ENCODE measurements at regions of chr2 and their contacts with region 1.

Region 1: DNA sequence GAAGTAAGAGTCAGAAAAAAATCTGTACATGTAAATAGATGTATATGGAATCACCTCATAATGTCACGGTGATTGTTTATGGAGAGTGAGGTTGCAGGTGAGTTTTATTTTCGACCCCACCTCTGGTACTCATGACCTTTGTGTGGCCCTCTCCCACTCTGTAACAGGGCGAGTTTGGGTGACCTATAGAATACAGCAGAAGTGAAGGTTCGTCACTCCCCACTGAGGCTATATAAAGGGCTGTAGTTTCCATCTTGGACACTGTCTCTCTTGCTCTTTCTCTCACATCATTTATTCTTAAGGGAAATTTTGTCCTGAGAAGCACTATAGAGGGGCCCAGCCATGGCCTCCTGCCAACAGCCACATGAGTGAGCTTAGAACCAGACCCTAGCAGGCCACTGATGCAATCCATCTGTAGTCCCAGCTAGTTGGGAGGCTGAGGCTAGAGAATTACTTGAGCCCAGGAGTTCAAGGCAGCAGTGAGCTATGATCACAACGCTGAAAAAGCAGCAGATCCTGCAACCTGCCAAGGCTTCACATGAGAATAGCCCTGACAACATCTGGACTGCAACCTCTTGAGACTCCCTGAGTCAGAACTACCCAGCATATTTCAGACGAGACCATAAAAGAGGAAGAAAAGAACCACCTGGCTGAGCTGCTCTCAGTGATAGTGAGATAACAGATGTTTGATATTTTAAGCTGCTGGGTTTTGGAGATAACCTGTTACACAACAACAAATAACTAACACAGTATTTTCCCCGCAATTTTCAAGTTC is 74.3 kb upstream of the SLC1A4 start:
- DNase-seq: no peak
- ATAC-seq: no peak
- H3K4me3 ChIP-seq: no peak overlapping the region
- H3K4me3 Mint-ChIP-seq: no peak overlapping the region
- H3K27ac ChIP-seq: no peak overlapping the region
- H3K27ac Mint-ChIP-seq: no peak overlapping the region
- H3K4me1 ChIP-seq: peaks cover 25% of the 10 kb centered on the region
- H3K4me1 Mint-ChIP-seq: peaks cover 18 to 19% of the 10 kb centered on the region in 2 donors
- H3K27me3 ChIP-seq: no peaks in the 10 kb centered on the region
- H3K27me3 Mint-ChIP-seq: peaks cover 0 to 2% of the 10 kb centered on the region in 2 donors
- CTCF ChIP-seq: no peak

Region 2: GRCh38 chr2:64819774-64820696 is 94.9 kb before region 1 on chr2:
- intact Hi-C with region 1: no loop called
- DNase-seq: peak; percentile 16 to 70
- ATAC-seq: peak; percentile 86 to 92 (median 88)
- H3K4me3 ChIP-seq: peak overlapping the region; percentile 5
- H3K4me3 Mint-ChIP-seq: peak overlapping the region; percentile 69
- H3K27ac ChIP-seq: peak overlapping the region; percentile 89
- H3K27ac Mint-ChIP-seq: peak overlapping the region; percentile 88 to 91
- H3K4me1 ChIP-seq: peaks cover 13% of the 10 kb centered on the region
- H3K4me1 Mint-ChIP-seq: peaks cover 19 to 21% of the 10 kb centered on the region in 2 donors
- H3K27me3 ChIP-seq: no peaks in the 10 kb centered on the region
- H3K27me3 Mint-ChIP-seq: no peaks in the 10 kb centered on the region
- CTCF ChIP-seq: no peak

Region 3: DNA sequence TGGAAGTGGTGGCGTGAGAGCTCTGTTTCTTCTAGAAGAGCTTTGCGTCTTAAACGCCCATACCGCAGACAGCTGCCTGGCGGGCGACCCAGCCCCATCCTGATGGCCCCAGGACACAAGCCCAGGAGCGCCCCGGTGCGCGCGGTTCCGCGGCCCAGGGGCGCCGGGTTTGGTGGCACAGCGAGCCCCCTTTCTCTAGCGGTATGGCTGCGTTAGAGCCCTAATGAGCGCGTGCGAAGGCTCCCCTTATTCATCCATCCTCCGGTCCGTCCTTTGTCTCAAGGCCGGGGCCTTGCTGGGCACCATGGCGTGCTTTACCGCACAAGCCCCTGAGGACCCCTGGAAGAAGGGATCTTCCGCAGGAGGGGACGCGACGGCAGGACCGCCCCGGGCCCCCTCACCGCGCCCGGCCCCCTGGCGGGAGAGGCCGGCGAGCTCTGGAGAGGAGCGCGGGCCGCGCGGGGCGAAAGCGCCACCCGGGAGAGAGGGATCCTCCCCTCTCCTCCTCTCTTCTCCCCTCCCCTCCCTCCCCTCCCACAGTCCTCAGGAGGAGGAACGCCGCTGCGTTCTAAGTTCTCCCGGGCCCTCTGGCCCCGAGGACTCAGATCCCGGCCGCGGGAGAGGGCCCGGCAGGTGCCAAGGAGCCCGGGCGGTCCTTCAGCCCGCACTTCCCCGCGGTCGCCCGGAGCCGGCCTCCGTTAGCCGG is 73.7 kb after region 1 on chr2:
- intact Hi-C with region 1: loop called (anchors 2 kb)
- DNase-seq: peak; percentile 40 to 79
- ATAC-seq: peak; percentile 48 to 64 (median 51)
- H3K4me3 ChIP-seq: peak overlapping the region; percentile 73
- H3K4me3 Mint-ChIP-seq: peak overlapping the region; percentile 84
- H3K27ac ChIP-seq: peak overlapping the region; percentile 78
- H3K27ac Mint-ChIP-seq: peak overlapping the region; percentile 37 to 63
- H3K4me1 ChIP-seq: peaks cover 23% of the 10 kb centered on the region
- H3K4me1 Mint-ChIP-seq: peaks cover 35 to 42% of the 10 kb centered on the region in 2 donors
- H3K27me3 ChIP-seq: no peaks in the 10 kb centered on the region
- H3K27me3 Mint-ChIP-seq: no peaks in the 10 kb centered on the region
- CTCF ChIP-seq: peak; percentile 28

Region 4: DNA sequence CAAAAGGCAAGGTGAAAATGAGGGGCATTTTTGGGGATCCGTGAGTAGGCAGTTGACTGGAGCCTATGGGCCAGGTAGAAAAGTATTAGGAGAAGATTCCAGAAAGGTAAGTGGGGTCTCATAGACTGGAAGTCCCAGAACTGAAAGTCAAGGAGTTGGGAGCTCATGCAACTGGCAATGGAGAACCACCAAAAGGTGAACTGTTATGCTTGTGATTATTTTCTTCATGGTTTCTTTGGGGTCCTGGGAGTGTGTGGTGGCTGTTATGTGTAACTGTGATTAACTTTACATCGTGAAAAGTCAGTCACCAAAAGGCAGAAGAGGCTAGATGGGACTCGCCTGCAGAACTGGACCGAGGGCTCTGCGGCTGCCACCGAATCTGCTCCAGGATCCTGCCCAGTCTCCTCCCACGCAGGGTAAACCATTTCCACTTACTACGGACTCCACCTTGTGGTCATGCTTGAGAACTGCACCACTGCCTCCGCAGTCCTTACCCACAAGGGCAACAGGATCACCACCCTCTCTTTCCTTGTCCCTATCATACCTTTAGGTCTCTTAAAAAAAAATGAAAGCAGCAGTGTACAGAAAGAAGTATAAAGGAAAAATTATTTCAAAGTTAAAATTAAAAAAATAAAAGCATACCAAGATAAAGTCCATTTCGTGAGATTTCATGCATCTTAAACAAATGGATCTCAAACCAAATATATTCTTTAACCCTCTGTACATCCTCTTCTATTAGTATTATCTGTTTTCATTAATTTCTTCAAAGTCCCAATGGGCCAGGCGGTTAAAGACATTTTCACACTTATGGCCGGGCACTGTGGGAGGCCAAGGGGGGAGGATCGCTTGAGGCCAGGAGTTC is 125.7 kb after region 1 on chr2:
- intact Hi-C with region 1: loop called (anchors 1 kb)
- DNase-seq: peak; percentile 67 to 90
- ATAC-seq: peak; percentile 94 to 100 (median 100)
- H3K4me3 ChIP-seq: no peak overlapping the region
- H3K4me3 Mint-ChIP-seq: no peak overlapping the region
- H3K27ac ChIP-seq: no peak overlapping the region
- H3K27ac Mint-ChIP-seq: no peak overlapping the region
- H3K4me1 ChIP-seq: peaks cover 4% of the 10 kb centered on the region
- H3K4me1 Mint-ChIP-seq: peaks cover 12 to 15% of the 10 kb centered on the region in 2 donors
- H3K27me3 ChIP-seq: no peaks in the 10 kb centered on the region
- H3K27me3 Mint-ChIP-seq: no peaks in the 10 kb centered on the region
- CTCF ChIP-seq: peak; percentile 95

Region 5: DNA sequence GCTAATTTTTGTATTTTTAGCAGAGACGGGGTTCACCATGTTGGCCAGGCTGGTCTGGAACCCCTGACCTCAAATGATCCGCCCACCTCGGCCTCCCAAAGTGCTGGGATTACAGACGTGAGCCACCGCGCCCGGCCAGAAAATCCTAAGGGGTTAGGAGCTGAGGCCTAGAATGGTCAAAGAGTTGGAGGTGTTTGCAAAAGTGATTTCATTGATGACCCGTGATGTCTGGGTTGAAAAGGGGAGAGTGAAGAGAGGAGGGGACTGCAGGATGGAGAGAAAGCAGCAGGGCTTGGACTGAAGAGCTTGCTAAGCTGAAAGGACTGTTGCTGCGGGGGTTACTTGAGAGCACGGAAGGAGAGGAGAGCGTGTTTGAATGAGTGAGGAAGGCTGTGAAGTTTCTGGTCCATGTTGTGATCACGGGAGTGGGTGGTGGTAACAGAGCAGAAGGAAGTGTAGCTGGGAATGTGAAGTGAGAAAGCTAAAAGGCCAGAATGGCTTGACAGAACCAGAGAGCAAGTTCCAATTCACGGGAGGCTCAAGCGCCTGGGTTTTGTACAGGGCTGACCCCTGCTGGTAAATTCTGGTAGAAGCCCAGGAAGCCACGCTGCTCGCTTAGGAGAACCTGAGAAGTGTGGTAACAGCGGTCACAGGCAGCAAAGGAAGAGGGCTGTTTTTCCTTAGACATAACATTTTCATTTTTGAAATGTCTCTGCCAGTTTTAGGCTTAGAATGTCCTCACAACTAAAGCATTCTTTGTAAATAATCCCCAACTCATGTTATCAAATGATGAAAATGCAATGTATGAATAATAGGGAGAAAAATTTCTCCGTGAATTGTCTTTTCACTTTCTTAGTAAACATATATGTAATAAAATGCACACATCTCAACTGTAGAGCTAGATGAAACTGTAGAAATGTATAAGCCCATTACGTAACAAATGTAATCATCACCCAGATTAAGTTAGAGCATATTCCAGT is 272.2 kb after region 1 on chr2:
- intact Hi-C with region 1: loop called (anchors 2 kb)
- DNase-seq: peak; percentile 47 to 78
- ATAC-seq: peak; percentile 79 to 95 (median 92)
- H3K4me3 ChIP-seq: no peak overlapping the region
- H3K4me3 Mint-ChIP-seq: no peak overlapping the region
- H3K27ac ChIP-seq: no peak overlapping the region
- H3K27ac Mint-ChIP-seq: no peak overlapping the region
- H3K4me1 ChIP-seq: peaks cover 4% of the 10 kb centered on the region
- H3K4me1 Mint-ChIP-seq: peaks cover 6 to 8% of the 10 kb centered on the region in 2 donors
- H3K27me3 ChIP-seq: no peaks in the 10 kb centered on the region
- H3K27me3 Mint-ChIP-seq: peaks cover 14 to 18% of the 10 kb centered on the region in 2 donors
- CTCF ChIP-seq: peak; percentile 77

Region 6: GRCh38 chr2:65256054-65256453 is 341.1 kb after region 1 on chr2:
- intact Hi-C with region 1: no loop called
- DNase-seq: no peak
- ATAC-seq: no peak
- H3K4me3 ChIP-seq: no peak overlapping the region
- H3K4me3 Mint-ChIP-seq: no peak overlapping the region
- H3K27ac ChIP-seq: no peak overlapping the region
- H3K27ac Mint-ChIP-seq: peak overlapping the region in 1 of 2 donors; percentile 53
- H3K4me1 ChIP-seq: no peaks in the 10 kb centered on the region
- H3K4me1 Mint-ChIP-seq: peaks cover 17 to 26% of the 10 kb centered on the region in 2 donors
- H3K27me3 ChIP-seq: no peaks in the 10 kb centered on the region
- H3K27me3 Mint-ChIP-seq: no peaks in the 10 kb centered on the region
- CTCF ChIP-seq: peak; percentile 9

Region 7: GRCh38 chr2:65576861-65577601 is 662.1 kb after region 1 on chr2:
- intact Hi-C with region 1: loop called (anchors 1 kb)
- DNase-seq: no peak
- ATAC-seq: no peak
- H3K4me3 ChIP-seq: no peak overlapping the region
- H3K4me3 Mint-ChIP-seq: no peak overlapping the region
- H3K27ac ChIP-seq: no peak overlapping the region
- H3K27ac Mint-ChIP-seq: no peak overlapping the region
- H3K4me1 ChIP-seq: no peaks in the 10 kb centered on the region
- H3K4me1 Mint-ChIP-seq: peaks cover 0 to 5% of the 10 kb centered on the region in 2 donors
- H3K27me3 ChIP-seq: no peaks in the 10 kb centered on the region
- H3K27me3 Mint-ChIP-seq: peaks cover 0 to 8% of the 10 kb centered on the region in 2 donors
- CTCF ChIP-seq: no peak

Measured in natural killer cell (primary cell).